ENCODE measurements at regions of chr3 and their contacts with region 1.

Region 1: DNA sequence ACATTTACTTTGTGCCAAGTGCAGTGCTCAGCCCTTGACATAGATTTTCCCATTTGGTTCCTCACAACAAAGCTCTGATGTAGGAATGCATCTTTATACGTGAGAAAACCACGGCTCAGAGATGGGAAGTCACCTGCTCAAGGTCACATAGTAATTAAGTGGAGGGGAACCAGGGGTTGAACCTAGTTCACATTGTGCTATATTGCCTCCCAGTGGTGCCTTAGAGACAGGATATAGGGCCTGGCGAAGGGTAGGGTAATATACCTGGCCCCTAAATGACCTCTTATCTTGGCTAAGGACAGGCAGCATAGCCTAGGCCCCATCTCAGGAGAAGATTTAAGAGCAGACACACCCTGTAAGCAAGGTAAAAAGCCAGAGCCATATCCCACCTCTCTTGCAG is 71.5 kb downstream of the FOXP1 start:
- DNase-seq: peak; percentile 63 to 67 (median 65)
- H3K4me3 ChIP-seq: no peak overlapping the region
- H3K4me3 Mint-ChIP-seq: peak overlapping the region in 1 of 8 donors; percentile 35
- H3K27ac ChIP-seq: no peak overlapping the region
- H3K27ac Mint-ChIP-seq: peak overlapping the region; percentile 67 to 92 (median 85)
- H3K4me1 ChIP-seq: peaks cover 27% of the 10 kb centered on the region
- H3K4me1 Mint-ChIP-seq: peaks cover 7 to 17% (median 14%) of the 10 kb centered on the region in 4 donors
- H3K27me3 ChIP-seq: no peaks in the 10 kb centered on the region
- H3K27me3 Mint-ChIP-seq: no peaks in the 10 kb centered on the region

Region 2: GRCh38 chr3:70550723-70551319 is 961.2 kb before region 1 on chr3:
- CTCF ChIA-PET with region 1: interaction called, 4 read pairs
- POLR2A ChIA-PET with region 1: no interaction called
- intact Hi-C with region 1: loop called (anchors 1 kb)
- DNase-seq: peak; percentile 54 to 62 (median 60)
- H3K4me3 ChIP-seq: no peak overlapping the region
- H3K4me3 Mint-ChIP-seq: no peak overlapping the region
- H3K27ac ChIP-seq: no peak overlapping the region
- H3K27ac Mint-ChIP-seq: no peak overlapping the region
- H3K4me1 ChIP-seq: no peaks in the 10 kb centered on the region
- H3K4me1 Mint-ChIP-seq: no peaks in the 10 kb centered on the region
- H3K27me3 ChIP-seq: peaks cover 3% of the 10 kb centered on the region
- H3K27me3 Mint-ChIP-seq: peaks cover 4% of the 10 kb centered on the region in 2 donors

Region 3: GRCh38 chr3:71130471-71131374 is 381.3 kb before region 1 on chr3:
- CTCF ChIA-PET with region 1: no interaction called
- POLR2A ChIA-PET with region 1: no interaction called
- intact Hi-C with region 1: loop called (anchors 2 kb)
- DNase-seq: peak; percentile 79 to 90 (median 85)
- H3K4me3 ChIP-seq: peak overlapping the region; percentile 59 to 90
- H3K4me3 Mint-ChIP-seq: peak overlapping the region; percentile 90 to 99 (median 94)
- H3K27ac ChIP-seq: peak overlapping the region; percentile 87
- H3K27ac Mint-ChIP-seq: peak overlapping the region; percentile 93 to 98 (median 97)
- H3K4me1 ChIP-seq: peaks cover 80% of the 10 kb centered on the region
- H3K4me1 Mint-ChIP-seq: peaks cover 39 to 90% (median 61%) of the 10 kb centered on the region in 4 donors
- H3K27me3 ChIP-seq: no peaks in the 10 kb centered on the region
- H3K27me3 Mint-ChIP-seq: no peaks in the 10 kb centered on the region

Region 4: DNA sequence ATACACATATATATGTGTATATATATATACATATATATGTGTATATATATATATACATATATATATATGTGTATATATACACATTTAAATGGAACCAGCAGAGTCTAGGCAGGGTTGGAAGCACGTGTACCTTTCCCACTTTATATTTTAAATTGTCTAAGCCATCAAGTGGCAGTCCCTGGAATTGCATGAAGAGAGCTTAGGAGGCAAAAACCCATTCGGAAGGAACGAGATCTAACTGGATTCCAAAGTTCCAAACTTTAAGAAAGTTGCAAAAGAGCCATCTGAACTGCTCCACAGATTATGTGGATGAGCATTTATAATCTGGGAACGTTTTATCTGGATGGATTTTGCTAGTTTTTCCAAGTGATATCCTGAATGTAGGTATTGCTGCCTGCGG is 115.0 kb before region 1 on chr3:
- CTCF ChIA-PET with region 1: interaction called, 12 read pairs
- POLR2A ChIA-PET with region 1: interaction called, 4 read pairs
- intact Hi-C with region 1: loop called (anchors 5 kb)
- DNase-seq: no peak
- H3K4me3 ChIP-seq: no peak overlapping the region
- H3K4me3 Mint-ChIP-seq: peak overlapping the region in 5 of 8 donors; percentile 20 to 84 (median 76)
- H3K27ac ChIP-seq: peak overlapping the region; percentile 15
- H3K27ac Mint-ChIP-seq: peak overlapping the region in 6 of 7 donors; percentile 73 to 92 (median 80)
- H3K4me1 ChIP-seq: peaks cover 66% of the 10 kb centered on the region
- H3K4me1 Mint-ChIP-seq: peaks cover 56 to 82% (median 69%) of the 10 kb centered on the region in 4 donors
- H3K27me3 ChIP-seq: no peaks in the 10 kb centered on the region
- H3K27me3 Mint-ChIP-seq: no peaks in the 10 kb centered on the region

Region 5: GRCh38 chr3:71461749-71462465 is 50.1 kb before region 1 on chr3:
- CTCF ChIA-PET with region 1: interaction called, 16 read pairs
- POLR2A ChIA-PET with region 1: interaction called, 3 read pairs
- intact Hi-C with region 1: no loop called
- DNase-seq: no peak
- H3K4me3 ChIP-seq: no peak overlapping the region
- H3K4me3 Mint-ChIP-seq: peak overlapping the region in 2 of 8 donors; percentile 38 to 39
- H3K27ac ChIP-seq: no peak overlapping the region
- H3K27ac Mint-ChIP-seq: peak overlapping the region; percentile 7 to 90 (median 67)
- H3K4me1 ChIP-seq: peaks cover 38% of the 10 kb centered on the region
- H3K4me1 Mint-ChIP-seq: peaks cover 49 to 84% (median 64%) of the 10 kb centered on the region in 4 donors
- H3K27me3 ChIP-seq: no peaks in the 10 kb centered on the region
- H3K27me3 Mint-ChIP-seq: no peaks in the 10 kb centered on the region

Region 6: DNA sequence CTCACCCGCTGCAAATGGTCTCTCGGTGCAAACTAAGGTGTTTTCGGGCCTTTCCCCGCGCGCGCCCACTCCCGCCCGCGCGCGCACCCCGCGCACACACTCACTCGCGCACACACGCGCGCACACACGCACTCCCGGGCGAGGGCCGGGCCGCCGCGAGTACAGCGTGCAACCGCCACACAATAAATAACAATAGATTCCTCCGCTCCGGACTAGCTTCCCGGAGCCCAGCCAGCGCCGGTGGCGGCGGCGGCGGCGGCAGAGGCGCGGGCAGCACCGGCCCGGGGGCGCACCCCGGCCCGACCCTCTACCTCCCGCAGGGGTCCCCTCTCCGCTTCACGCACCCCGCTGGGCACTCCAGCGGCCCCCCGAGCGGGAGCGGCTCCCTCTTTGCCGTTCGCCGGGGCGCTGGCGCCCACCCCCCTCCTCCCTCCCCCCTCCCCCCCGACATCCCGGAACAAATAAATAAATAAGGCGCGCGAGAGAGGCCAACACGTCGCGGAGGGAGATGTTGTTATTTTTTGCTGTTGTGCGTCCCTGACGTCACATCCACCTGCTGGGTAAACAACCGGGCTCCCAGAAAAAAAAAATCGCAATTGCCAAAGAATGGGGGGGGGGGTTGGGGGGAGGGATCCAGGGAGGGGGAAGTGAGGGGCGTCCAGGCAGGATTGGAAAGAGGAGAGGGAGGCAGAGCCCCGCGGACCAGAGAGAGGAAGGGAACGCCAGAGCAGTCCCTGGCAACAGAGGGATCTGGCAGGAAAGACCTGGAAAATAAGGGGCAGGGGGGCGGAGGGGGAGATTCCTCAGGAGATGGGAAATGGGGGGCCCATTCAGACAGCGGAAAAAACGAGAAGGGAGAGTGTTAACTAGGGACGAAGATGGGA is 71.8 kb after region 1 on chr3 and contains the start of gene FOXP1:
- CTCF ChIA-PET with region 1: interaction called, 6 read pairs
- POLR2A ChIA-PET with region 1: no interaction called
- intact Hi-C with region 1: loop called (anchors 1 kb)
- DNase-seq: peak; percentile 69 to 80 (median 75)
- H3K4me3 ChIP-seq: peak within 1 kb of the TSS; percentile 47 to 65
- H3K4me3 Mint-ChIP-seq: peak within 1 kb of the TSS; percentile 91 to 96 (median 94)
- H3K27ac ChIP-seq: peak within 1 kb of the TSS; percentile 64
- H3K27ac Mint-ChIP-seq: peak within 1 kb of the TSS; percentile 94 to 98 (median 97)
- H3K4me1 ChIP-seq: peaks cover 27% of the 10 kb centered on the region
- H3K4me1 Mint-ChIP-seq: peaks cover 14 to 53% (median 20%) of the 10 kb centered on the region in 4 donors
- H3K27me3 ChIP-seq: no peaks in the 10 kb centered on the region
- H3K27me3 Mint-ChIP-seq: no peaks in the 10 kb centered on the region
- total RNA-seq, gene FOXP1: 290 to 348 TPM

Measured in CD4-positive, alpha-beta memory T cell (primary cell).